Tibial artery (tissue), 4 donors: ENCODE measurements at regions of chr10 and their contacts with region 1.

Region 1: DNA sequence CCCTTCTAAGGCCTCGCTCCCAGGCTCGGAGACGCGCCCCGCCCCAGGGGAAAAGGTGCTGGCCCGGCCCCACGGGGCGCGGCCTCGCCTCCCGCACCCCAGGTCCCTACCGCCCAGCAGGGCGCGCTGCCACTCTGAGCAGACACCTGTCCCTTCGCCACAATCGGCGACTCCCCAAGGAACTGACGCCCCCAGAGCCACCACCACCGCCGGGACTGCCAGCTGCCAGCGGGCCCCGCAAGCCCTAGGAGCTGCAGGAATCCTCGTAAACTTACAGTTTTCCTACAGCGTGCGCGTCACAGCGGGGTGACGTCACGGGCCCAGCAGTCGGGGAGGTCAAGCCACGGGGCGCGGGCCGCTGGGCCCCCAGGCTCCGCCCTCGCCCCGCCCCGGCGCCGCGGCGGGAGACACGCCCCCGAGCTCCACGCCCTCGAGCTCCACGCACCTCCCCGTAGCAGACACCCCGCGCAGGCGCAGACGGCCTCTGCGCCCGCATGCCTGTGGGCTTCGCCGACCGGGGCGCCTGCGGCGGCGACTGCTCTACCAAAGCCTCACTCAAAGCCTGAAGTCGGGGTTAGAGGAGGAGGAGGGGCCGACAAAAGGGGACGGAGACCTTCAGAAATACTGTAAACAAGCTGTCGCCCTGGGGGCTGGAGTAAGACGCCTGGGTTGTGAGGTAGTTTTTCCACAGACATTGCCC is at the start of gene ZNF438:
- DNase-seq: peak; percentile 93 to 98
- H3K4me3 ChIP-seq: peak within 1 kb of the TSS; percentile 67 to 81
- H3K27ac ChIP-seq: peak within 1 kb of the TSS; percentile 100
- H3K4me1 ChIP-seq: peaks cover 7 to 53% (median 28%) of the 10 kb centered on the region in 4 donors
- H3K27me3 ChIP-seq: no peaks in the 10 kb centered on the region
- CTCF ChIP-seq: peak; percentile 56 to 70

Region 2: DNA sequence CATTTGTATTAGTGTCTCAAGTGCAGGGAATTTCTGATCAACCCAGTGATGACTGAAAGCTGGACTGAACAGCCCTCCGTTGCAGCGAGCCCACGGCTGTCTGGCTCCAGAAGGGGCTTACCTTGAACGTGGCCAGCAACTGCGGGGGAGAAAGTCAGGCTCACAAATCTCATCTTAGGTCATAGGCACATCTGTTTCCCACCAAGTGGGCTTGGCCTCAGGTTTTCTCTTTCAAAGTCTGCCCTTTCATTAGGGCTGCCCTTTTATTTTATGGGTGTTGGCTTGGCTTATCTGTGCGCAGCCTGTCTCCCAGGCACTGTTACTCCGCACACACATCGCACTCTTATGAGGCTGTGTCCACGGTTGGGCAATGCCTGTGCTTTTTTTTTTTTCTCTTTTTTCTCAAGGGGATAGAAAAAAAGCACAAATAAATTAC is 1150.4 kb before region 1 on chr10:
- intact Hi-C with region 1: no loop called
- DNase-seq: peak; percentile 77 to 81
- H3K4me3 ChIP-seq: peak overlapping the region in 1 of 2 donors; percentile 25
- H3K27ac ChIP-seq: peak overlapping the region; percentile 94 to 96
- H3K4me1 ChIP-seq: peaks cover 5 to 80% (median 48%) of the 10 kb centered on the region in 4 donors
- H3K27me3 ChIP-seq: no peaks in the 10 kb centered on the region
- CTCF ChIP-seq: no peak

Region 3: DNA sequence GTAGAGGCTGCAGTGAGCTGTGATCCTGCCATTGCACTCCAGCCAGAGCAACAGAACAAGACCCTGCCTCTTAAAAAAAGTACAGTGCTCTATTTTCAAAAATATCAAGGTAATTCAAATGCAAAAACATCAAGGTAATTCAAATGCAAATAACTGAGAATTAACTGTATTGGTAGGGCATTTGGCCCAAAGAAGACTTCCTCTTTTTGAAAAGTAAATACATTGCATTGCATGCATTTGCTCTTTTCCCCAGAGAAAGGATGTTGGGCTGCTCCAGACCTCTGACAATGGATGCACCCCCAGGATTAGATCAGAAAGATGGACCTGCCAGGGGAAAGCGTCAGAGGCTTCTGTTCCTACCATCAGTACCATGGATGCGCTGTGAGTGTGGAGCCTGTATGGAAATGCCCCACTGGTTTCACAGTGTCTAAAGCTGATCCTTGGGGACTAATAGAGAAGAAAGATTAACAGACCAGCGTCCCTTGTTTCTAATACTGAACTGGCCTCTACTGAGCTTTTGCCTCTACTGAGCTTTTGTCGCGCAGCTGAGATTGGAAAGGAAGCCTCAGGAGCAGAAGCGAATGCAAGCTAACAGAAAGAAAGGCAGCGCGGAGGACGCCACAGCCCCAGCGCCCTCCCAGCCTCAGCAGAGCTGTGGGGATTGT is 308.6 kb before region 1 on chr10:
- intact Hi-C with region 1: loop called (anchors 5 kb)
- DNase-seq: no peak
- H3K4me3 ChIP-seq: no peak overlapping the region
- H3K27ac ChIP-seq: no peak overlapping the region
- H3K4me1 ChIP-seq: peaks cover 0 to 3% (median 0%) of the 10 kb centered on the region in 4 donors
- H3K27me3 ChIP-seq: no peaks in the 10 kb centered on the region
- CTCF ChIP-seq: no peak

Region 4: GRCh38 chr10:30783939-30784500 is 247.7 kb before region 1 on chr10:
- intact Hi-C with region 1: loop called (anchors 10 kb)
- DNase-seq: peak; percentile 85 to 92
- H3K4me3 ChIP-seq: peak overlapping the region; percentile 74 to 76
- H3K27ac ChIP-seq: peak overlapping the region; percentile 97
- H3K4me1 ChIP-seq: peaks cover 0 to 22% (median 20%) of the 10 kb centered on the region in 4 donors
- H3K27me3 ChIP-seq: no peaks in the 10 kb centered on the region
- CTCF ChIP-seq: peak; percentile 89 to 93

Region 5: GRCh38 chr10:30980951-30981616 is 50.6 kb before region 1 on chr10:
- intact Hi-C with region 1: no loop called
- DNase-seq: peak; percentile 83 to 88
- H3K4me3 ChIP-seq: no peak overlapping the region
- H3K27ac ChIP-seq: peak overlapping the region; percentile 42 to 60
- H3K4me1 ChIP-seq: peaks cover 0 to 46% (median 13%) of the 10 kb centered on the region in 4 donors
- H3K27me3 ChIP-seq: no peaks in the 10 kb centered on the region
- CTCF ChIP-seq: no peak

Region 6: GRCh38 chr10:31075434-31075833 is 43.7 kb after region 1 on chr10:
- intact Hi-C with region 1: loop called (anchors 5 kb)
- DNase-seq: no peak
- H3K4me3 ChIP-seq: no peak overlapping the region
- H3K27ac ChIP-seq: peak overlapping the region; percentile 5 to 15
- H3K4me1 ChIP-seq: peaks cover 0 to 54% (median 25%) of the 10 kb centered on the region in 4 donors
- H3K27me3 ChIP-seq: no peaks in the 10 kb centered on the region
- CTCF ChIP-seq: no peak

Region 7: GRCh38 chr10:31318854-31319601 is 287.3 kb after region 1 on chr10 and contains the start of gene ZEB1:
- intact Hi-C with region 1: loop called (anchors 10 kb)
- DNase-seq: peak; percentile 91 to 94
- H3K4me3 ChIP-seq: peak within 1 kb of the TSS; percentile 98 to 99
- H3K27ac ChIP-seq: peak within 1 kb of the TSS; percentile 97 to 98
- H3K4me1 ChIP-seq: peaks cover 0 to 25% (median 6%) of the 10 kb centered on the region in 4 donors
- H3K27me3 ChIP-seq: no peaks in the 10 kb centered on the region
- CTCF ChIP-seq: peak; percentile 50 to 61